ENCODE measurements at regions of chr10 and their contacts with region 1.

Region 1: DNA sequence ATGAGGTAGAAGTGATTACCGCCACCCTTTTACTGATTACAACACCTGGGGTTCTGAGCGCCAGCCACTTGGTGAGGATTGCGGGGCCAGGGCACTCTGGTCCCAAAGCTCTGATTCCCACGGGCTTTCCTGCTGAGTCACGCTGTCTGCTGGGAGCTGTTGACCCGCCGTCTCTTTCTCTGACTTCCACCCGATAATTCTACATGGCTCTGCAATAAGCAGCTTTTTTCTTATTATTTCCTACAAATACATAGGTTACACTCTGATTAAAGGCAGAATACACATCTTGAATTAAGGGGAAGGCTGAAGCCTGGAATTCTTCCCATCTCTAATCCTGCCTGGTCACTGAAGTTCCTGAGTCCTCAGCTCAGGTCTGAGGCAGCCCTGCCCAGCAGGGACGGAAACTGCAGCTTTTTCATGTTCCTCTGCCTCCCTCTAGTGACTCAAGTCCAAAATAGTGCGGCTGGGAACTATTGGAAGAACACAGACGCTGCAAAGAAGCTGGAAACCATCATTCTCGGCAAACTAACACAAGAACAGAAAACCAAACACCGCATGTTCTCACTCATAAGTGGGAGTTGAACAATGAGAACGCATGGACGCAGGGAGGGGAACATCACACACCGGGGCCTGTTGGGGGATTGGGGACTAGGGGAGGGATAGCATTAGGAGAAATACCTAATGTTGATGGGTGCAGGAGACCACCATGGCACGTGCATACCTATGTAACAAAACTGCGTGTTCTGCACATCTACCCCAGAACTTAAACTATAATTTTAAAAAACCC is 178.3 kb downstream of the PRKCQ start:
- DNase-seq: peak; percentile 37
- ATAC-seq: peak; percentile 92
- H3K4me3 ChIP-seq: no peak overlapping the region
- H3K27ac ChIP-seq: no peak overlapping the region
- H3K4me1 ChIP-seq: no peaks in the 10 kb centered on the region
- H3K27me3 ChIP-seq: peaks cover 0 to 5% of the 10 kb centered on the region in 2 experiments; a peak in 3 of 4 replicates
- CTCF ChIP-seq: peak; percentile 69 to 88 (median 77)
- EP300 ChIP-seq: no peak
- POLR2A ChIP-seq: no peak
- RAD21 ChIP-seq: peak; percentile 98

Region 2: GRCh38 chr10:6101181-6101580 is 300.6 kb before region 1 on chr10:
- CTCF ChIA-PET with region 1: interaction called, 120 read pairs
- POLR2A ChIA-PET with region 1: interaction called, 4 read pairs
- RAD21 ChIA-PET with region 1: interaction called, 27 read pairs
- SMC1A ChIA-PET with region 1: interaction called, 17 read pairs
- in situ Hi-C with region 1: loop called (anchors 5 kb)
- intact Hi-C with region 1: no loop called
- DNase-seq: no peak
- ATAC-seq: peak; percentile 94
- H3K4me3 ChIP-seq: no peak overlapping the region
- H3K27ac ChIP-seq: peak overlapping the region; percentile 53
- H3K4me1 ChIP-seq: peaks cover 7% of the 10 kb centered on the region
- H3K27me3 ChIP-seq: no peaks in the 10 kb centered on the region
- CTCF ChIP-seq: no peak
- EP300 ChIP-seq: no peak
- POLR2A ChIP-seq: peak; percentile 55; the same call in 1 of the 2 replicates
- RAD21 ChIP-seq: no peak

Region 3: DNA sequence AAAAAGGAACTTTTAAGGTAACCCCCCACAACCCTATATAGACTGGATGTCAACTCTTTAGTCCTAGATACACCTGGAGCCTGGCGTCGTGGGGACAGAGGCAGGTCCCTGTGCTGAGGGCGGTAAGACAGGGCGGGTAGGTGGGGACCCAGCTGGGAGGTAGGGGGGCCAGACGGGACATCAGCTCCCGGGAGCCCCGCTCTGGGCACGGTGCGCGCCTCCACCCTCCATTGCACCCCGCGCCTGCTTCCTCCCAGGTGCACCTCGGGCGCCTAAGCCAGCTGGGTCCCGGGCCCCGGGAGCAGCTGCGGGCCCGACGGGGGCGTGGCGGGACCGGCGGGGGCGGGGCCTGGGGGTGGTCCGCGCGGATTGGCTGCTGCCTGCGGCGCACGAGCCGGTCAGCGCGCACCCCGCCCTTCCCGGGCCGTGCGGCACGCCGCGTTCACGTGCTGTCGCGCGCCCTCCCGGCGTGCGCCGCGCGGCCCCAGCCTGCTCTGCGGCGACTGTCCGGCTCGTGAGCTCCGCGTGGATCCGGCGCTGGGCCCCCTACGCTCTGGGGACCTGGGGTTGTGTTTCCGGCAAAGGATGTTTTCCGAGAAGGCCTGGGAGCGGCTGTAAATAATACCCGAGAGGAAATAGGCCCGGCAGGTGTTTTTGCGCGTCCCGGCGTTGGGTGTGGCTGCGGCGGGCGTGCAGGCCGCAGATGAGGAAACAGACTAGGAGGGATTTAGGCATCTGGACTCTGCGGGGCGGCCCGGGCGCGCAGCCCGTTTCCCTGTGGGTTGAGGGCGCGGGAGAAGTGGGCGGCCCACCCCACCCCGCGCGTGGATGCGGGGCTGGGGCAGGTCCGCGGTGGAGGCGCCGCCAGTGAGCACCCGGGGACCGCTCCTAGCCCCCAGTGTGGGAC is 238.1 kb before region 1 on chr10:
- CTCF ChIA-PET with region 1: interaction called, 20 read pairs
- POLR2A ChIA-PET with region 1: no interaction called
- RAD21 ChIA-PET with region 1: interaction called, 7 read pairs
- SMC1A ChIA-PET with region 1: interaction called, 11 read pairs
- in situ Hi-C with region 1: no loop called
- intact Hi-C with region 1: no loop called
- DNase-seq: peak; percentile 47
- ATAC-seq: peak; percentile 99
- H3K4me3 ChIP-seq: peak overlapping the region; percentile 67
- H3K27ac ChIP-seq: peak overlapping the region; percentile 83
- H3K4me1 ChIP-seq: no peaks in the 10 kb centered on the region; the same call in 1 of the 2 replicates
- H3K27me3 ChIP-seq: no peaks in the 10 kb centered on the region
- CTCF ChIP-seq: no peak
- EP300 ChIP-seq: no peak
- POLR2A ChIP-seq: peak; percentile 85
- RAD21 ChIP-seq: no peak

Region 4: GRCh38 chr10:6269953-6270867 is 131.5 kb before region 1 on chr10:
- CTCF ChIA-PET with region 1: interaction called, 11 read pairs
- POLR2A ChIA-PET with region 1: interaction called, 4 read pairs
- RAD21 ChIA-PET with region 1: interaction called, 15 read pairs
- SMC1A ChIA-PET with region 1: interaction called, 18 read pairs
- in situ Hi-C with region 1: no loop called
- intact Hi-C with region 1: loop called (anchors 1 kb)
- DNase-seq: peak; percentile 55
- ATAC-seq: peak; percentile 80
- H3K4me3 ChIP-seq: no peak overlapping the region
- H3K27ac ChIP-seq: peak overlapping the region; percentile 50
- H3K4me1 ChIP-seq: peaks cover 40% of the 10 kb centered on the region
- H3K27me3 ChIP-seq: no peaks in the 10 kb centered on the region
- CTCF ChIP-seq: no peak
- EP300 ChIP-seq: peak; percentile 98; a peak in 3 of 4 replicates
- POLR2A ChIP-seq: no peak
- RAD21 ChIP-seq: 0 out of 2 replicates have a peak, but pooled peaks have one; percentile 25

Region 5: DNA sequence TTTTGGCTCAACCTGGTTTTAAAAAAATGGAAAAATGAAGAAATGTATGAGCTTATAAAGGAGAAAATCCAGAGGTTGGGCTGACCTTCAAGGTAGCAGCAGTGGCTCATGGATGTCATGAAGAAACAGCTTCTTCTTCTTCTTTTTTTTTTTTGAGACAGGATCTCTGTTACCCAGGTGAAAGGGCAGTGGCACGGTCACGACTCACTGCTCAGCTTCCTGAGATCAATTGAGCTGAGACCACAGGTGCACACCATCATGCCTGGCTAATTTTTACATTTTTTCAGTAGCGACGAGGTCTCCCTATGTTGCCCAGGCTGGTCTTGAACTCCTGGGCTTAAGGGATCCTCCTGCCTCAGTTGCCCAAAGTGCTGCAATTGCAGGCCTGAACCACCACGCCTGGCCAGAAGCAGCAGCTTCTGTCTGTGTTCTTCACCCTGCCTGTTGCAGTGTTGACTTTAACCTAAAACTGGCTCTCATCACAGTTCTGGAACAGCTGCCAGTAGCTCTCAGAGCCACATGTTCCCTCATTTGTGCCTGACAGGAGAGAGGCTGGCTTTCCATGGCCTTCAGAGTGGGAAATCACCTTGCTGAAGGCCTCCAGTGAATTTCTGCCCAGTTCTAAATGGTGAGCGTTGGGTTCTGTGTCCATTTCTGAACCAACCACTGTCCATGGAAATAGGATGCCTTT is 81.3 kb before region 1 on chr10:
- CTCF ChIA-PET with region 1: interaction called, 4 read pairs
- POLR2A ChIA-PET with region 1: no interaction called
- RAD21 ChIA-PET with region 1: interaction called, 7 read pairs
- SMC1A ChIA-PET with region 1: interaction called, 10 read pairs
- in situ Hi-C with region 1: no loop called
- intact Hi-C with region 1: no loop called
- DNase-seq: peak; percentile 45
- ATAC-seq: peak; percentile 98
- H3K4me3 ChIP-seq: no peak overlapping the region
- H3K27ac ChIP-seq: no peak overlapping the region
- H3K4me1 ChIP-seq: peaks cover 6% of the 10 kb centered on the region
- H3K27me3 ChIP-seq: no peaks in the 10 kb centered on the region
- CTCF ChIP-seq: no peak
- EP300 ChIP-seq: no peak
- POLR2A ChIP-seq: no peak
- RAD21 ChIP-seq: no peak

Region 6: DNA sequence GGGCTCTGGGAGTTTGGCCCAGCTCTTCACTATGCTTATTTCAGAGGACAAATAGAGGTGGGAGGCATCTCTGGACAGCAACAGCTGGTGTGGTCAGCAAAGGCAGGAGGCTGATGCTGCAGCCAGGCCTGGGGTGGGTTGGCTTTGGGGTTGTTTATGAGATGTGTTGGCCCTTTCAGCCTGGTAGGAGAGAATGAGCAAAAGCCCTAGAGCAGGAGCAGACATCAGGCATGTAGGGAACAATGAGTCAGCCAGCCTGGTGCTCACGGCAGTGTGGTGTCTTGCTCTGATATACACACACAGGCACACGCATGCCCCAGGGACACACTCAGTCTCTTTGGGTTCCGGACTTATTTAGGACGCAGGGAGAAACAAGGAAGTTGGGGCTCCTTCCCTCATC is 21.2 kb after region 1 on chr10:
- CTCF ChIA-PET with region 1: interaction called, 10 read pairs
- POLR2A ChIA-PET with region 1: no interaction called
- RAD21 ChIA-PET with region 1: interaction called, 4 read pairs
- SMC1A ChIA-PET with region 1: no interaction called
- in situ Hi-C with region 1: no loop called
- intact Hi-C with region 1: no loop called
- DNase-seq: no peak
- ATAC-seq: no peak; the same call in 2 of the 3 replicates
- H3K4me3 ChIP-seq: no peak overlapping the region
- H3K27ac ChIP-seq: no peak overlapping the region
- H3K4me1 ChIP-seq: no peaks in the 10 kb centered on the region
- H3K27me3 ChIP-seq: no peaks in the 10 kb centered on the region; a peak in 1 of 4 replicates
- CTCF ChIP-seq: no peak
- EP300 ChIP-seq: no peak
- POLR2A ChIP-seq: no peak
- RAD21 ChIP-seq: no peak

Region 7: DNA sequence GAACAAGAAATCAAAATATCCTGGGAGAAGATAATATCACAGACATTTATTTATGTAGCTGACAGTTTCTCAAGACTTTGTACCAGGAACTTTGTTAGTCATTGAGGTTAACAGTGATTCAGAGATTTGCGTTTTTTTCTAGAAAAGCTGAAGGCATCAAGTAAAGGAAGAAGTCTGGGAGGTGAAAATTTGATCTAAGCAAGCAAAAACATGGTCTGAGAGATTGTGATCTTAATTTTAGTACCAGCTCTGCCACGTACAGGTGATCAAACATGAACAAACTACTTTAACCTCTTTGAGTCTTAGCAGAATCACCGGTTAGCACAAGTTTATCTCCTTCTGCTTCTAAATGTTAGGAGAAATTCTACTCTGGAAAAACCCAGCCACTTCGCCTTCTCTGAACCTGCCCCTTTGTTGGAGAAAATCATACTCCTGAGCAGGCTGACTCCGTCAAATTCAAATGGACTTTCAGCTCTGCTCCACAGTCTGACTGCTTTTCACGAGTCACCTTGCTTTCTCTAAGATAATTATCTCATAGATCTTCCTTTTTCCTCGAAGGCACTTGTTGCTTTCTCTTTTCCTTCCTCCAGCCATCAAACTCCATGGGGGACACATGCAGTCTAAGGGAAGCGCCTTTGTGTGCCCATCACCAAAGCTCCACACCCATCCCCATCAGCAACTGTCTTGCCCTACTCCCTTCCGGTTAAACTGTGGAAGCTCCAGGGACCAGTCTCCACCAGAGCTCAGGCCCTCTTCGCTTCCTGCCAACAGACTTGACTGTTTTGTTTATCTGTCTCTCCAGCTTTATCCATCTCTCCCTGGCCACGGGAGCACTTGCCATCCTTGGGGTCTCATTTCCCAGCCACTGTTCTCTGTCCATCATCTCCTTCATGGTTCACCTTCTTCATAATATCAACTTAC is 92.0 kb after region 1 on chr10:
- CTCF ChIA-PET with region 1: no interaction called
- POLR2A ChIA-PET with region 1: no interaction called
- RAD21 ChIA-PET with region 1: no interaction called
- SMC1A ChIA-PET with region 1: no interaction called
- in situ Hi-C with region 1: no loop called
- intact Hi-C with region 1: no loop called
- DNase-seq: no peak
- ATAC-seq: no peak
- H3K4me3 ChIP-seq: no peak overlapping the region
- H3K27ac ChIP-seq: no peak overlapping the region
- H3K4me1 ChIP-seq: no peaks in the 10 kb centered on the region
- H3K27me3 ChIP-seq: peaks cover 0 to 2% of the 10 kb centered on the region in 2 experiments; a peak in 3 of 4 replicates
- CTCF ChIP-seq: no peak
- EP300 ChIP-seq: no peak
- POLR2A ChIP-seq: no peak
- RAD21 ChIP-seq: no peak

Measured in GM12878 (cell line).